Activated CD4-positive, alpha-beta memory T cell treated with anti-CD3 and anti-CD28 coated beads, Interleukin-2, amount 10 ng/mL, durations not matched to agents 7 days and 5 days (primary cell): ENCODE measurements at regions of chr6 and their contacts with region 1.

Region 1: DNA sequence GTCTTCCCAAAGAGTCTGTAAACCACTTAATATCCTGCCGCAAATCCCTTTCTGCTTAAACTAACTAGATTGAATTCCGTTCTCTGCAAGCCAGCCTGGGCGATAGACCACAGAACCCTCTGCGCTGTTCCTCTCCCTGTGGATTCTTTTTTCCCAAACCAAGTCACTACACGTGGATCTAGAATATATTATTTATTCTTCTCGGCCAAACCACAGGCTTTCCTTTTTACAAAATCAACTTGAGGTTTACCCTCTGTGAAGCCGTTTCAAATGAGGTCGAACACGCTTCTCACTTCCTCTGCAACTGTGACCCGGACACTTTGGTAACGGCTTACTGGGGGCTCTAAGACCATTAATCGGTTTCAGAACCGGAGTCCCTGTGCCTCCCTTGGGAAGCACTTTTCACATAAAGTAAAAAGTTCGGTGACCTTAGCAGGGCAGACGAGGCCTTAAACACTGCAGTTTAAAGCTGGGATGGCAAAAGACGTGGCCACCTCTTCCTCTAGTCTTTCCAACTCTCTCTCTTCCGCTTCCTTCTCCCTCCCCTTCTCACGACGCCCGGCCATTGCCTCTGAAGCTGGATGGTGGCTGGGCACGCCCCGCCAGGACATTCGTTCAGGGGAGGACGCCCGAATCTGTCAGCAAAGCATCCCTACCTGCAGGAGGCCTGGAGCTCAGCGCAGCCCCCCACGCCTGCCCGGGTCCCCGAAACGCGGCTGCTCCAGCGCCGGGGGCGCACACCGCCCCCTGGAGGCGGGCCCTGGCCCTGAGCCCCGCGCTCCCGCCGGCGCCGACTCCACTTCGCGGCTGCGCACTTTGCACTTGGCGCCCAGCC is 55.0 kb upstream of the FOXC1 start:
- DNase-seq: peak; percentile 72
- H3K4me3 Mint-ChIP-seq: peak overlapping the region; percentile 80
- H3K27ac Mint-ChIP-seq: peak overlapping the region; percentile 74
- H3K4me1 Mint-ChIP-seq: peaks cover 34% of the 10 kb centered on the region
- H3K27me3 Mint-ChIP-seq: peaks cover 17% of the 10 kb centered on the region

Region 2: GRCh38 chr6:1372690-1373089 is 182.0 kb before region 1 on chr6:
- CTCF ChIA-PET with region 1: no interaction called
- POLR2A ChIA-PET with region 1: no interaction called
- DNase-seq: no peak
- H3K4me3 Mint-ChIP-seq: no peak overlapping the region
- H3K27ac Mint-ChIP-seq: no peak overlapping the region
- H3K4me1 Mint-ChIP-seq: no peaks in the 10 kb centered on the region
- H3K27me3 Mint-ChIP-seq: peaks cover 70% of the 10 kb centered on the region

Region 3: GRCh38 chr6:1535295-1535694 is 19.4 kb before region 1 on chr6:
- CTCF ChIA-PET with region 1: interaction called, 365 read pairs
- POLR2A ChIA-PET with region 1: interaction called, 9 read pairs
- DNase-seq: peak; percentile 74
- H3K4me3 Mint-ChIP-seq: peak overlapping the region; percentile 38
- H3K27ac Mint-ChIP-seq: peak overlapping the region; percentile 84
- H3K4me1 Mint-ChIP-seq: peaks cover 23% of the 10 kb centered on the region
- H3K27me3 Mint-ChIP-seq: no peaks in the 10 kb centered on the region